ENCODE measurements at regions of chr2 and their contacts with region 1.

Region 1: GRCh38 chr2:40448468-40449079 is 3.3 kb downstream of the SLC8A1 start:
- DNase-seq: no peak
- ATAC-seq: no peak

Region 2: DNA sequence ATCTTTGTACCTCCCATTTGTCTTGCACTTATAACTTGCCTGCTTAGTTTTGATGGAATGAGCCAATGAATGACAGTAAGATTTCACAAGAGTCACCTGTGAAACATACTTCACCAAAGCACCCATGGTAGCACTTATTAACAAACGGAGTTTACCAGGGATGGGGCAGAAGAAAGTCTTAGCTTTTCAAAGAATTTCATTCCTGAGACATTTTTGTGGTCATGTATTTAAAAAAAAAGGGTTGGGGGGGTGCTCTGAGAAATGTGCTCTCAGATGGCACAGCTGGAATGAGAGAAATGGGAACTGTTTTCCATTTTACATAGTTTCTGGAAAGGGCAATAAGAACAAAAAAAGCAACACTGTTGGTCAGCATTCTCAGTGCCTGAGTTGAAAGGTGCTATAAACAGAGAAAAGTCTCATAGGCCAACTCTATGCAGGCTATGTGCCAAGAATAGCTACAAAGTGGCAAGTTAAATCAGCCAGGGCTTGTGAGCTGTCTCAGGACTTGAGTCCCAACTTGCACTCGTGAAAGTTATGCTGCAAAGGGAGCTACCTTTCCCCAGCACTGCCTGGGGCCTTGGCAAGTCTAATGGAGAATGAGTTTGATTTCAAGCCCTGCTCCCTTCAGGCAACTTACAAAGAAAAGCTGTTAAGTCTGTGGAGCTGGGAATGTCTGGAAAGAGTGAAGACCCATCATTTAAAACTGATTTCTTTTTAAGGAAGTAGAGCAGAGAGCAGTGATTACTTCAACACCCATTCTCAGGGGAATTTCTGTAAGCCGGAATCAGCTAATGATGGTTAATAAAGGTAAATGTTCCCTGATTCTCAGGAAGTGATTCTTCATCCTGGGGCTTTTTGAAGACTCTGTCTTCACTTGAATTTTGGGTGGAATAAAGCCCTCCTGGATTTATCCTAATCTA is 167.3 kb before region 1 on chr2:
- intact Hi-C with region 1: loop called in 1 of 2 experiments (anchors 10 kb)
- DNase-seq: no peak
- ATAC-seq: no peak

Region 3: DNA sequence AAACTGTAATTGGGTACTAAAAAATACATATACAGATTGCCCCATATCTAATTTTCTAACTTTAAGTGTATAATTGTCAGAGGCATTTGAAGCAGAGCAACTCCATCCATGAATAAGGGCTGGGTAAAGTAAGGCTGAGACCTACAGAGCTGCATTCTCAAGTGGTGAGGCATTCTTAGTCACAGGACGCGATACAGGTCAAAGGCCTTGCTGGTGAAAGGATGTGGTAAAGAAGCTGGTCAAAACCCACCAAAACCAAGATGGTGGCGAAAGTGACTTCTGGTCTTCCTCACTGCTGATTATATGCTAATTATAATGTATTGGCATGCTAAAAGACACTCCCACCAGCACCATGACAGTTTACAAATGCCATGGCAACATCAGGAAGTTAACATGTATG is 46.7 kb before region 1 on chr2:
- intact Hi-C with region 1: no loop called
- DNase-seq: no peak
- ATAC-seq: no peak